ENCODE measurements at regions of chr20 and their contacts with region 1.

Region 1: GRCh38 chr20:63537525-63538203 is 488 bp upstream of the PTK6 start:
- DNase-seq: peak; percentile 93
- H3K4me3 ChIP-seq: peak overlapping the region in 1 of 3 experiments; percentile 28
- H3K27ac ChIP-seq: peak overlapping the region; percentile 19
- H3K4me1 ChIP-seq: peaks cover 56% of the 10 kb centered on the region
- H3K27me3 ChIP-seq: no peaks in the 10 kb centered on the region
- CTCF ChIP-seq: peak; percentile 82 to 98

Region 2: GRCh38 chr20:63223221-63224207 is 314.1 kb before region 1 on chr20:
- CTCF ChIA-PET with region 1: no interaction called
- dilution Hi-C with region 1: loop called (anchors 5 kb)
- in situ Hi-C with region 1: no loop called
- intact Hi-C with region 1: no loop called
- DNase-seq: no peak
- H3K4me3 ChIP-seq: no peak overlapping the region
- H3K27ac ChIP-seq: no peak overlapping the region
- H3K4me1 ChIP-seq: peaks cover 8% of the 10 kb centered on the region
- H3K27me3 ChIP-seq: peaks cover 2% of the 10 kb centered on the region
- CTCF ChIP-seq: peak; percentile 66 to 90

Region 3: DNA sequence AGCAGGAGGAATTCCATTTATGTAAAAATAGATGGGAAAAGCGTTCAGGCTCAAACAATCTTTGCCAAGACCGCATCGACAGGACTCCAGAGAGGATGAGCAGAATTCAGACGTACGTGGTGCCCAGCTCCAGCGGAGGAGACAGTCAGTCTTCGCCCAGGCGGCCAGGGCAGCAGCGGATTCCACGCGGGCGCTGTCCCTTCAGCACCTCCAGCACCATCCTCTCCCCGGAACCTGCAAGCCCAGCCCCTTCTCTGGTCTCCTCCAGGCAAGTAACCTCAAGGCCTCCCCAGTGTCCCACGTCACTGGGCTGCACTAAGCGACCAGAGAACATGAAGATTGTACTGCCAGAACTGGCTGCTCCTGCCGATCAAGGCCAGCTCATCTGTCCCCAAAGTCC is 62.5 kb before region 1 on chr20:
- CTCF ChIA-PET with region 1: no interaction called
- dilution Hi-C with region 1: no loop called
- in situ Hi-C with region 1: no loop called
- intact Hi-C with region 1: no loop called
- DNase-seq: peak; percentile 34
- H3K4me3 ChIP-seq: no peak overlapping the region
- H3K27ac ChIP-seq: no peak overlapping the region
- H3K4me1 ChIP-seq: no peaks in the 10 kb centered on the region
- H3K27me3 ChIP-seq: peaks cover 33% of the 10 kb centered on the region
- CTCF ChIP-seq: no peak

Region 4: DNA sequence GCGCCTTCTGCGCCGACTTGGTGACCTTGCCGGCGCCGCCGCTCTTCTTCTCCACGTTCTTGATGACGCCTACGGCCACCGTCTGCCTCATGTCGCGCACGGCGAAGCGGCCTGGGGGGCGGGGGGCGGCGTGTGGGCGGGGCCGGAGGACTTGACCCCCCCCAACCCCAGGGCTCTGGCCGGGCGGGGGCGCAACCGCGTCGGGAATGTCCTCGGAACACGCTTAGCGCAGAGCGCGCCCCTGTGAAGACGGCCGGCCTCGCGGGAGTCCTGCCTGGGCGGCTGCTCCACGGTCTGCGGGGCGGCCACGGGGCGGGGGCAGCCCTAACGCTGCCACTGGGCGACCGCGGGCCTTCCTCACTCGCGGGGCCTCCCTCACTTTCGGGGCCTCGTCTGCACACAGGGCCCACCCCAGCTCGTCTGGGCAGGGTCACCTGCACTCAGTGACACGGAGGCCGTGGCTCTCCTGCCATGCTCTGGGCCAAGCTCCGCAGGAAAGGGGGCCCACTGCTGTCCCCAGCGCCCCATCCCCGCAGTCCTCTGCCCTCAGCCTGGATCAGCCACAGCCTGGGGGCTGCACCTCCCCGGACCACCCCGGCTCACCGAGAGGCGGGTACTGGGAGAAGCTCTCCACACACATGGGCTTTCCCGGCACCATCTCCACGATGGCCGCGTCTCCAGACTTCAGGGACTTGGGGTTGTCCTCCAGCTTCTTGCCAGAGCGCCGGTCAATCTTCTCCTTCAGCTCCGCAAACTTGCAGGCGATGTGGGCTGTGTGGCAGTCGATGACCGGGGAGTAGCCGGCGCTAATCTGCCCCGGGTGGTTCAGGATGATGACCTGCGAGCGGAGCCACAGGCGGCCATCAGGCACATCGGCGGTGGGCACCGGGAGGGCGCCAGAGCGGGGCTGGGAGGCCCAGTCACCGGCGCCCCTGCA is 49.1 kb before region 1 on chr20:
- CTCF ChIA-PET with region 1: no interaction called
- dilution Hi-C with region 1: no loop called
- in situ Hi-C with region 1: no loop called
- intact Hi-C with region 1: no loop called
- DNase-seq: no peak
- H3K4me3 ChIP-seq: no peak overlapping the region
- H3K27ac ChIP-seq: no peak overlapping the region
- H3K4me1 ChIP-seq: no peaks in the 10 kb centered on the region
- H3K27me3 ChIP-seq: peaks cover 15% of the 10 kb centered on the region
- CTCF ChIP-seq: no peak

Region 5: DNA sequence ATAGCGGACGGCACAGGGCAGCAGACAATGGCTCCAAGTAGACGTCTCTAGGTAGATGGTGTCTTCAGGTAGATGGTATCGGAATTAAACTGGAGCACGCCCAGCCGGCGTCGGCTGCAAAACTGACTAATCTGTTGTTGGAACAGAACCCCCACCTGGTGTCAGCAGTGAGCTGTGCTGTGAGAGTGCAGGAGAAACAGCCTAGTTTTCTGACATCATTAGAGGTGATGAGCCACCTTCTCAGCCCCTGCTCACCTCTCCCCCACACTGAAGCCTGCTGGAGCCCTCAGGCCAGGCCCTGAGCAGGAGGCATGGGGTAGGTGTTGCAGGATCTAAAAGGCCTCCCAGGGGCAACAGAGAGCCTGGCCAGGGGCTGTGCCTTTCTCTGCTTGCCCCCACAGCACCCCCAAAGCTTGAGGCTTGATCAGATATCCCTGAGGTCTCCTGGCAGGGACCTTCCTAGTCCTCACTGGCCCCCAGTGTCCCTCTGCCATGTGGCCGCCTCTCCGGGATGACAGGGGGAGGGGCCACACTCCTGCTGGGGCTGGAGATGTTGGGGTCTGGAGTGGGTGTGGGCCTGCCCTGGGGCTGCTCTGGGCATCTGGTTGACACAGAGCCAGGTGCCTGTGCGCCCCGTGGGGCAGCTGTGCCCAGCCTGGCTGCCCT is 43.3 kb after region 1 on chr20:
- CTCF ChIA-PET with region 1: no interaction called
- dilution Hi-C with region 1: no loop called
- in situ Hi-C with region 1: no loop called
- intact Hi-C with region 1: loop called (anchors 1 kb)
- DNase-seq: peak; percentile 79
- H3K4me3 ChIP-seq: no peak overlapping the region
- H3K27ac ChIP-seq: no peak overlapping the region
- H3K4me1 ChIP-seq: no peaks in the 10 kb centered on the region
- H3K27me3 ChIP-seq: no peaks in the 10 kb centered on the region
- CTCF ChIP-seq: peak; percentile 81 to 83

Region 6: DNA sequence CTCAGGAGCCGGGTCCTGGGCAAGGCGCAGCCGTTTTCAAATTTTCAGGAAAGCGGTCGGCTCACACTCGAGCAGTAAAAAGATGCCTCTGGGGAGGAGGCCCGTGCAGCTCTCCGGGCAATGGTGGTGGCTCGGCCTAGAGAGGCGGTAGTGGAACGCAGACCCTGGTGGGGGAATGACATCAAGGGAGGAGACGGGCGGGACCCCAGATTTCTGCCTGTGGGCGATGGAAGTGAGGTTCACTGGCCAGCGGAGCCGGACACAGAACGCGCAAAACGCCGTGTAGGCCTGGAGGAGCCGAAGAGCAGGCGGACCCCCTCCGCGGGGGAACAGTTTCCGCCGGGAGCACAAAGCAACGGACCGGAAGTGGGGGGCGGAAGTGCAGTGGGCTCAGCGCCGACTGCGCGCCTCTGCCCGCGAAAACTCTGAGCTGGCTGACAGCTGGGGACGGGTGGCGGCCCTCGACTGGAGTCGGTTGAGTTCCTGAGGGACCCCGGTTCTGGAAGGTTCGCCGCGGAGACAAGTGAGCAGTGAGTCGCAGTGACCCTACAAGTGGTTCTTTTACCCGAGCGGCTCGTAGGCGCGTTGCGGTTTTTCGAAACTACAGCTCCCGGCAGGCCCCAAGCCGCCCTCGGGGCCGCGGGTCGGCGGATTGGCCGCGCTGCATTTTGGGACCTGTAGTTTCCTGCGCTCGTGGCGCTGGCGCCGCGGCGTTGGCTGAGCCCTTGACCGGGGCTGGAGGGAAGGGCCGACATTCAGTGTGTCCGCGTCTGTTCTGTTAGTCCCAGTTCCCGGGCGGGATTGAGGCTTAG is 120.5 kb after region 1 on chr20 and contains the start of gene RTEL1:
- CTCF ChIA-PET with region 1: no interaction called
- dilution Hi-C with region 1: loop called (anchors 5 kb)
- in situ Hi-C with region 1: no loop called
- intact Hi-C with region 1: loop called (anchors 10 kb)
- DNase-seq: peak; percentile 91
- H3K4me3 ChIP-seq: peak within 1 kb of the TSS; percentile 75 to 92 (median 92)
- H3K27ac ChIP-seq: peak within 1 kb of the TSS; percentile 47
- H3K4me1 ChIP-seq: peaks cover 20% of the 10 kb centered on the region
- H3K27me3 ChIP-seq: no peaks in the 10 kb centered on the region
- CTCF ChIP-seq: no peak
- total RNA-seq, gene RTEL1: 8.0 to 32.5 TPM

Region 7: GRCh38 chr20:63767456-63767855 is 229.8 kb after region 1 on chr20:
- CTCF ChIA-PET with region 1: no interaction called
- dilution Hi-C with region 1: loop called (anchors 10 kb)
- in situ Hi-C with region 1: no loop called
- intact Hi-C with region 1: no loop called
- DNase-seq: no peak
- H3K4me3 ChIP-seq: no peak overlapping the region
- H3K27ac ChIP-seq: no peak overlapping the region
- H3K4me1 ChIP-seq: no peaks in the 10 kb centered on the region
- H3K27me3 ChIP-seq: no peaks in the 10 kb centered on the region
- CTCF ChIP-seq: no peak

Region 8: GRCh38 chr20:63884506-63885263 is 347.0 kb after region 1 on chr20:
- CTCF ChIA-PET with region 1: no interaction called
- dilution Hi-C with region 1: loop called (anchors 5 kb)
- in situ Hi-C with region 1: no loop called
- intact Hi-C with region 1: no loop called
- DNase-seq: no peak
- H3K4me3 ChIP-seq: no peak overlapping the region
- H3K27ac ChIP-seq: no peak overlapping the region
- H3K4me1 ChIP-seq: peaks cover 27% of the 10 kb centered on the region
- H3K27me3 ChIP-seq: no peaks in the 10 kb centered on the region
- CTCF ChIP-seq: no peak

Region 9: GRCh38 chr20:64038565-64039292 is 501.1 kb after region 1 on chr20:
- CTCF ChIA-PET with region 1: no interaction called
- dilution Hi-C with region 1: no loop called
- in situ Hi-C with region 1: no loop called
- intact Hi-C with region 1: loop called (anchors 2 kb)
- DNase-seq: peak; percentile 80
- H3K4me3 ChIP-seq: peak overlapping the region; percentile 4 to 55 (median 44)
- H3K27ac ChIP-seq: no peak overlapping the region
- H3K4me1 ChIP-seq: peaks cover 10% of the 10 kb centered on the region
- H3K27me3 ChIP-seq: no peaks in the 10 kb centered on the region
- CTCF ChIP-seq: peak; percentile 36 to 78